ENCODE measurements at regions of chr14 and their contacts with region 1.

Region 1: DNA sequence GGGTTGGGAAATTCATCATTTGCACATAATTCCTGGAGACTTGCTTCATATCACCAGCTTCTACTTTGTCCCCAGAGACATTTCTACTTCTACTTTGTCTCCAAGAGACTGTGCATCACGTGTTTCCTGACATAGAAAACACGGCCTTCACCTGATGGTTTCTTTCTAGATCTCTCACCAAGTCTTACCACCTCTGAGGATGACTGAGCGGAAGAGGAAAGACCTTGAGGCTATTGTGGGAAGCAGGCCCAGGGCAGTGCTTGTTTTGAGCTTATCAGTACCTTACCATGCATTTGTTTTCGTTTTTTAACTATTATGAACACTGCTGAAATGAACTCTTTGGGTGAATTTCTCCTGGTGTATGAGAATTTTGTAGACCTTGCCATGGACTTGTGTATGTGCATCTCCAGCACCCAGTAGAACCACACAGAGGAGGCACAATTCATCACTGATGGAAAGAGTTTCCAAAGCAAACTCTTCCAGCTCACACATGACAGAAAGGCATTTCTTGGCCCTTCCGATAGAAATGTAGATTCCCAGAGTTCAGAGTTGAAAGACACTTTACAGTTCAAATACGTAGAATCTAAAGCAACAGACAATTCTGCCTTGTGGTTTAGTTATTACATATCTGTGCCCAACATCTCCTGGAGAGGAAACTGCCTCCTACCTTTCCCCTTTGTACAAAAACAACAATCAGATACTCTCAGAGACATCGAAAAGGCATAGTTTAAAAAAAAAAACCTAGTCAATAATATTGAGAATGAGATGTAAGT is 434.7 kb downstream of the FUT8 start:
- DNase-seq: peak; percentile 79
- H3K4me3 Mint-ChIP-seq: peak overlapping the region; percentile 22
- H3K27ac Mint-ChIP-seq: peak overlapping the region; percentile 80
- H3K4me1 Mint-ChIP-seq: peaks cover 66% of the 10 kb centered on the region
- H3K27me3 Mint-ChIP-seq: no peaks in the 10 kb centered on the region

Region 2: GRCh38 chr14:65336191-65336591 is 511.1 kb before region 1 on chr14:
- intact Hi-C with region 1: no loop called
- DNase-seq: peak; percentile 56
- H3K4me3 Mint-ChIP-seq: peak overlapping the region; percentile 87
- H3K27ac Mint-ChIP-seq: peak overlapping the region; percentile 94
- H3K4me1 Mint-ChIP-seq: peaks cover 56% of the 10 kb centered on the region
- H3K27me3 Mint-ChIP-seq: no peaks in the 10 kb centered on the region

Region 3: GRCh38 chr14:65949711-65950516 is 102.7 kb after region 1 on chr14:
- intact Hi-C with region 1: loop called (anchors 1 kb)
- DNase-seq: no peak
- H3K4me3 Mint-ChIP-seq: no peak overlapping the region
- H3K27ac Mint-ChIP-seq: peak overlapping the region; percentile 65
- H3K4me1 Mint-ChIP-seq: peaks cover 42% of the 10 kb centered on the region
- H3K27me3 Mint-ChIP-seq: no peaks in the 10 kb centered on the region

Region 4: GRCh38 chr14:66099931-66100330 is 252.7 kb after region 1 on chr14:
- intact Hi-C with region 1: loop called (anchors 1 kb)
- DNase-seq: no peak
- H3K4me3 Mint-ChIP-seq: no peak overlapping the region
- H3K27ac Mint-ChIP-seq: no peak overlapping the region
- H3K4me1 Mint-ChIP-seq: peaks cover 5% of the 10 kb centered on the region
- H3K27me3 Mint-ChIP-seq: peaks cover 47% of the 10 kb centered on the region